ENCODE measurements at regions of chr20 and their contacts with region 1.

Region 1: DNA sequence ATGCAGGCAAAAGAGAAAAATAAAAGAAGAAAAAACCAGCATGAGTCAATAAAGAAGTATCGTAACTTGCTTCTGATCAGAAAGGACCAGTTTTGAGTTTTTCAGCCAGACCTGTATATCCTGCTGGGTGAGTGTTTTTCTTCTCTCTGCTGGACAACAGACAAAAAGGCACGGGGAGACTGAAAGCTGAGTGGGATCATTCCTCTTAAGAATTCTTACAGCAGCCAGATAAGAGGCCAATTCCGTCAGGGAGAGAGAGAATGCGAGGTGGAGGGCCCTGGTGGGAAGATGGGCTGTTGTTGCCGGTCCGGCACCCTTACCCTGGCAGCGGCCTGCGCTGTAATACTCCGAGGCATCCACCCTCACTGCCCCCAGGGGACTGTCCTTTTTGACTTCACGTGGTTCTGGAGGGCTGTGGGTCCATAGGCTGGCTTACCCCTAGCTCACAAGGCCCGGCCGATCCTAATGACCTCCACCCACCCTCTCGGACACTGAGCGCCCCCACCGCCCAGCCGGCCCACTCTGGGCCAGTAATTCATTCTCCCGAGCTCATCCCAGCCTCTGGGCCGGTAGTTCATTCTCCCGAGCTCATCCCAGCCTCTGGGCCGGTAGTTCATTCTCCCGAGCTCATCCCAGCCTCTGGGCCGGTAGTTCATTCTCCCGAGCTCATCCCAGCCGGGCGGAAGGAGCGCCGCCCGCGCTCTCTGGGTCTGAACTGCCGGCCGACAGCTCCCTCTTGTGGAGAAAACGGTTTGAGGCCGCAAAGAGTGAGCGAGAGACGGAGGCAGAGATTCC is 118.3 kb upstream of the SIRPA start:
- DNase-seq: peak; percentile 71
- H3K27ac ChIP-seq: peak overlapping the region; percentile 50
- CTCF ChIP-seq: peak; percentile 87; the same call in 1 of the 2 replicates

Region 2: GRCh38 chr20:1663917-1664316 is 113.0 kb before region 1 on chr20:
- CTCF ChIA-PET with region 1: no interaction called
- POLR2A ChIA-PET with region 1: no interaction called
- DNase-seq: peak; percentile 34
- H3K27ac ChIP-seq: no peak overlapping the region
- CTCF ChIP-seq: no peak

Region 3: GRCh38 chr20:1764136-1765033 is 12.5 kb before region 1 on chr20:
- CTCF ChIA-PET with region 1: interaction called, 11 read pairs
- POLR2A ChIA-PET with region 1: no interaction called
- DNase-seq: peak; percentile 79
- H3K27ac ChIP-seq: no peak overlapping the region
- CTCF ChIP-seq: peak; percentile 91

Region 4: GRCh38 chr20:1802385-1803060 is 25.6 kb after region 1 on chr20:
- CTCF ChIA-PET with region 1: interaction called, 12 read pairs
- POLR2A ChIA-PET with region 1: no interaction called
- DNase-seq: peak; percentile 73
- H3K27ac ChIP-seq: peak overlapping the region; percentile 69
- CTCF ChIP-seq: peak; percentile 97

Measured in RWPE1 (cell line).